GM13977 (cell line): ENCODE measurements at regions of chr5 and their contacts with region 1.

Region 1: DNA sequence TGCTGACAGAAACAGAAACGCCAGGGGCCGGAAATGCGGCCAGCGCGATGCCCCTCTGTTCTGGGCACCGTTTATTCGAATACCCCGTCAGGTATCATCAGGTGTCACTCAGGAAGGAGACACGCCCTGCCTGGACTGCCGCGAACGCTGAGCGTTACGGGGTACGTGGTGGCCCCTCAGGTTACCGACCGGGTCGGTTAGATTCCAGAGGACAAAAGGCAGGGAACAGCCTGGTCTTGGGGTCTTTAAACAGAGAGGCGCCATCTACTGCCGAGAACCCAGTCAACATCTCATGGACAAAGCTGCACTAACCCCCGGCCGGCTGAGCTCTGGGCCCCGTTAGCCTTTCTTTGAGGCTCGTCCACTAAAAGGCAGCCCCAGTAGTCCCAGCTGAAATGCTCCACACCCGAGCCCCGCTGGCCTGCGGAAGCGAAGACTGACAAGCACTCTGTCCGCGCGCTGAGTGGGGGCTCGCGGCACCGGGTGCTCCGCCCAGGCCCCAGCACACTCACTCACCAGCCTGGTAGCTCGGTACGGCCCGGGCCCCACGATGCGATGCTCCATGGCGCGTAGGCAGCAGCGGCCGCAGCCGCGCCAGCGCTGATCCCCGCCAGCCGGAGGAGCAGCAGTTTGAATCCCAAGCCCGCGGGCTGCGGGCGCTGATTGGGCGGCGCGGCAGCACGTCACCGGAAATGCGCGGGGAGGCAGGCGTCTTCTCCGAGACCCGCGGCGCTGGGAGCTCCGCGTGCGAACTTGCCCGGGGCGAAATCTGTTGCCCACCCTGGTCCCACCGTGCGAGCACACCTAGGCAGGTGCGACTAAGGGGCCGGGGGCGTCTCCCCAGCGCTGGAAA is at the start of gene DEPDC1B:
- DNase-seq: peak; percentile 90
- CTCF ChIP-seq: peak; percentile 44

Region 2: GRCh38 chr5:60457233-60457632 is 242.5 kb before region 1 on chr5:
- in situ Hi-C with region 1: no loop called
- DNase-seq: no peak
- CTCF ChIP-seq: no peak

Region 3: GRCh38 chr5:60738461-60738860 is 38.7 kb after region 1 on chr5:
- in situ Hi-C with region 1: no loop called
- DNase-seq: no peak
- CTCF ChIP-seq: no peak

Region 4: DNA sequence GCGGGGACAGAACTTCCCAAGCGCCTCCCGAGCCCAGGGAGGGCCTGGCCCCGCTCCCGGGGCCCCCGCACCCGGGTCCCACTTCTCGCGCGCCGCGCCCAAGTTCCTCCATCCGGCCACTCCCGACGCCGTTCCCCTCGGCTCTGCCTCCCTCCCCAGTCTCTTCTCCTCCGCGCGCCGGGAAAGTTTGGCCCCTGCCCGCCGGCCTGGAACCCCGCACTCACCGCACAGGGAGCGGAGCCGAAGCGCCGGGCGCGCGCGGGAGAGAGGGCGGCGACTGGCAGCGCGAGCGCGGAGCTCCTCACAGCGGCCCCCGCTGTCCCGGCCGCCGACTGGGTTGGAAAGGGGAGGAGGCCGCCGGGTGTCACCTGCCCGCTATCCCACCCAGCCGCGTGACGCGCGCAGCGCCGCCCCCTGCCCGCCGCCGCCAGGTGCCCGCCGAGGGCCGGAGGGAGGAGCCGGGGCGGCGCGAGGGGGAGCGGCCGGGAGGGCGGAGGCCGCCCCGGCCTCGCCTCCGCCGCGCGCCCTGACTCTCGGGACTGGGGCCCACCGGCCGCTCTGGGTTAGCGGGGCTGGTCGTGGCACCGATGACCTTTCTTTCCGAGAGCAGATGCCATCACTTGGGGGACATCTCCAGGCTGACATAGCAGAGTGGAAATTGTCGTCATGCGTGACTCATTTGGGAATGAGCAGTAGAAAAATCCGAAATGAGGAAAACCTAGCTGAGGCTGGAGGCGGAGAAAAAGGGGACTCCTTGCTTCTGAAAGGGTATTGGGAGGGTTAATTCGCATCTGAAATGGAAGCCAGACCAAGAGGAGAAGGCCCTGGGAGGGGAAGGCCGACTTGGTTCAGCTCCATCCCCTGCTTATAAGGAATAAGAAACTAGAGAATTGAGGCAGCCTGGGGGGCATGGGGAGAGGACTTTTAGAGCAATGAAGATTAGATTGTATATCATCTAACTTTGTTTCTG is 144.5 kb after region 1 on chr5 and contains the start of gene ELOVL7:
- in situ Hi-C with region 1: loop called (anchors 25 kb)
- DNase-seq: peak; percentile 85
- CTCF ChIP-seq: peak; percentile 50